Dendritic cell treated with granulocyte-macrophage colony-stimulating factor and Interleukin-4, amounts not matched to agents 40 ng/mL and 50 ng/mL, for 4 days (primary cell): ENCODE measurements at regions of chr5 and their contacts with region 1.

Region 1: DNA sequence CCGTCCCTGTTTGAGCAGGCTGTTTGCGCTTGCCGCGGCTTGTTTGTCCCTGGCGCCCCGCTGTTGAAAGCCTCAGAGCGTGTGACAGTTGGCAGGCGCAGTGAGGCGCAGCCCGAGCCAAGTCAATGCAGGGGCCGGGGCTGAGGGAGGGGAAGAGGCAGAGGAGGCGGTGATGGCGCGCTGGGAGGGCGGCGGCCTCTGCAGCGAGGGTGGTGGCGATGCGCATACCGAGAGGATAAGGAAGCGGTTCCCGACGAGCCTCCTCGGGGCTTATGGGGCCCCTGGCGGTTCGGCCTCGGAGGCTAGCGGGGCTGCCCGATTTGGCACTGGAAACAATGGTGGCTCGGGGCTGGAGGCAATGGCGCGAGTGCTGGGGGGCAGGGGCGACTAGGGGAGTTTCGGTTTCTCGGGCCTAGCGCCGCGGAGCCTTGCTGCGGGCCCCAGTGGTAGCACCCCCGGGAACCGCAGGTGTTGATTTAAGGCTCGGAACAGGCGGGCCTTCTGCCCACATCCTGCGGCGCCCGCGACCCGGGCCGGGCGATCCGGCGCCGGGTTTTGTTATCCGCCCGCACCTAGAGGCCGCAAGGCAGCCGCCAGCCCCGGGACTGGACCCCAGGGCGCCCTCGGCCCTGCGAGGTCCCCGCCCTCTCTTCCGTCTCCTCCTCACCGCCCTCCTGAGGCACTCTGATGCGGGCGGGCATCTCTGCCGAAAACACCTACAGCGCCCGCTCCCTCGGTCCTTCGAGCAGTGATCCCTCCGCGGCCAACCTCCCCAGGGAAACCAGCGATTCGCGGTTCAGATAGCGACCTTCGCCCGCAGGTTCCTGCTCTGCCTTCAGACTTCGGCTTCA is 947 bp upstream of the LNPEP start:
- H3K4me3 Mint-ChIP-seq: peak overlapping the region; percentile 88
- H3K27ac Mint-ChIP-seq: peak overlapping the region; percentile 99
- H3K4me1 Mint-ChIP-seq: peaks cover 69% of the 10 kb centered on the region
- H3K27me3 Mint-ChIP-seq: no peaks in the 10 kb centered on the region

Region 2: GRCh38 chr5:96881511-96882115 is 53.3 kb before region 1 on chr5:
- intact Hi-C with region 1: loop called (anchors 2 kb)
- H3K4me3 Mint-ChIP-seq: no peak overlapping the region
- H3K27ac Mint-ChIP-seq: peak overlapping the region; percentile 79
- H3K4me1 Mint-ChIP-seq: peaks cover 51% of the 10 kb centered on the region
- H3K27me3 Mint-ChIP-seq: no peaks in the 10 kb centered on the region

Region 3: DNA sequence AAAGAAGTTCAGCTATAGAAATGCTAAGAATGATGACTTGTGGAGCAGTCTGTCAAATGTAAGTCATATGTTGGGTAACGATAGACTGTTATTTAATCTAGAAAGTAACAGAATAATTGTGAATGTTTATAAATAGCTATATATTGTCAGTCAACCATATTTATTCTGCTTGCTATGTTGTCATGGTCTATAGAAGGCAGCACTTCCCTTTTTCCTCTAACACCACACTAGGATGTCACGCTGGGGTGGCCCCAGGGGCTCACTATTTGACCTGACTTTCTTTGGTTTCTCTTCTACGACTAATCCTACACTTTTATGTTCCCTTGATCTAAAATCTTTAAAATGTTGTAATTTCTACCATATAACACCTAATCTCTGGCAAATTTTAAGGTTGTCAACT is 38.1 kb before region 1 on chr5:
- intact Hi-C with region 1: loop called (anchors 2 kb)
- H3K4me3 Mint-ChIP-seq: peak overlapping the region; percentile 70
- H3K27ac Mint-ChIP-seq: peak overlapping the region; percentile 89
- H3K4me1 Mint-ChIP-seq: peaks cover 14% of the 10 kb centered on the region
- H3K27me3 Mint-ChIP-seq: no peaks in the 10 kb centered on the region